GM13977 (cell line): ENCODE measurements at regions of chr14 and their contacts with region 1.

Region 1: GRCh38 chr14:70600382-70601157 is at the start of gene MED6:
- DNase-seq: peak; percentile 92
- CTCF ChIP-seq: no peak

Region 2: GRCh38 chr14:70489579-70490175 is 110.9 kb before region 1 on chr14:
- in situ Hi-C with region 1: no loop called
- DNase-seq: no peak
- CTCF ChIP-seq: no peak

Region 3: GRCh38 chr14:70714055-70714621 is 113.6 kb after region 1 on chr14:
- in situ Hi-C with region 1: loop called (anchors 10 kb)
- DNase-seq: no peak
- CTCF ChIP-seq: peak; percentile 47

Region 4: GRCh38 chr14:70972107-70972976 is 371.8 kb after region 1 on chr14:
- in situ Hi-C with region 1: loop called (anchors 25 kb)
- DNase-seq: peak; percentile 50
- CTCF ChIP-seq: peak; percentile 77